Activated CD8-positive, alpha-beta T cell treated with anti-CD3 and anti-CD28 coated beads, Interleukin-2, amount 10 ng/mL, durations not matched to agents 7 days and 5 days (primary cell): ENCODE measurements at regions of chr1 and their contacts with region 1.

Region 1: GRCh38 chr1:151594143-151594625 is 17.7 kb upstream of the SNX27 start:
- DNase-seq: peak; percentile 90
- ATAC-seq: peak; percentile 98
- H3K4me3 Mint-ChIP-seq: peak overlapping the region; percentile 47
- H3K27ac Mint-ChIP-seq: no peak overlapping the region
- H3K4me1 Mint-ChIP-seq: peaks cover 9% of the 10 kb centered on the region
- H3K27me3 Mint-ChIP-seq: peaks cover 12% of the 10 kb centered on the region

Region 2: GRCh38 chr1:151502923-151503780 is 91.0 kb before region 1 on chr1:
- CTCF ChIA-PET with region 1: no interaction called
- POLR2A ChIA-PET with region 1: no interaction called
- DNase-seq: no peak
- ATAC-seq: peak; percentile 23
- H3K4me3 Mint-ChIP-seq: no peak overlapping the region
- H3K27ac Mint-ChIP-seq: no peak overlapping the region
- H3K4me1 Mint-ChIP-seq: peaks cover 12% of the 10 kb centered on the region
- H3K27me3 Mint-ChIP-seq: peaks cover 13% of the 10 kb centered on the region

Region 3: DNA sequence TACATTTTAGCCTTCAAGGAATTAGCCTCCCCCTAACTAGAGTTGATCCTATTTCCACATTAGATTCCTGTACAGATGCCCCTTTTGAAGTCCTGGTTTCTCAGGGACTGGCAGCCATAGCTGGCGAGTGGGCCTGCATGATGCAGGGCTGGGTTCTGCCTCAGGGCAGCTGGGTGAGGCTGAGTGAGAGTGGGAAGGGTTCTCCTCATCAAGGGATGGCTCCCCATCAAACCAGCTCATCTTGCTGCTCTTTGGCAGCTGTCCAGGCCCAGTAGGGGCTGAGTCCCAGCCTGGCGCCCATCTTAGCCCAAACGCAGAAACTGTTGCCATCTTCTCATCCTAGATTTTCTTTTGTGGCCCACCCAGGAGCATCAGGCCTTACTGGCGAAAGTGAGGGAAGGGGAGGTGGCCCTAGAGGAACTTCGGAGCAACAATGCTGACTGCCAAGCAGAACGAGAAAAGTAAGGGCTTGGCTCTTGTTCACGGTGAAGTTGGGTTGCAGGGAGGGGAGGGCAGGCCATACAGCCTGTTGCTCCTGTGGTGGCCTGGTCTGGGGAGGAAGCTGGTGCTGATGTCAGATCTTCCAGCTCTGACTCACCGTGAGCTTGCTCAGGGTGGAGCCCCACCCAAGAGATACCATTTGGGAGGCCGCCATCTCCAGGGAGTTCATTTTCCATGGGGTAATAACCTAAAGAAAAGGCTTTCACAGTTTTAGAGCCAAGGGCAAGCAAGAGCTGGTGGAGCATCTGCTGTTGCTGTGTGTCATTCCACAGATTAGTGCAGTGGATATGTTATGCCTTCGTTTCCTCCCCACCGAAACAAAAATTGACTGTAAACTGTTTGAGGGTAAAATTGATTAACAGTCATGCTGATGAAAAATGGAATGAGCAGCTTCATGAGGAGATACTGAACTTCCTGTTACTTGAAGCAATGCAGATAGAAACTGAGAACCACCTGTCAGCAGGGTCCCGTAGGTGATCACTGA is 19.3 kb before region 1 on chr1:
- CTCF ChIA-PET with region 1: interaction called, 26 read pairs
- POLR2A ChIA-PET with region 1: no interaction called
- DNase-seq: no peak
- ATAC-seq: peak; percentile 49
- H3K4me3 Mint-ChIP-seq: no peak overlapping the region
- H3K27ac Mint-ChIP-seq: no peak overlapping the region
- H3K4me1 Mint-ChIP-seq: peaks cover 8% of the 10 kb centered on the region
- H3K27me3 Mint-ChIP-seq: no peaks in the 10 kb centered on the region

Region 4: DNA sequence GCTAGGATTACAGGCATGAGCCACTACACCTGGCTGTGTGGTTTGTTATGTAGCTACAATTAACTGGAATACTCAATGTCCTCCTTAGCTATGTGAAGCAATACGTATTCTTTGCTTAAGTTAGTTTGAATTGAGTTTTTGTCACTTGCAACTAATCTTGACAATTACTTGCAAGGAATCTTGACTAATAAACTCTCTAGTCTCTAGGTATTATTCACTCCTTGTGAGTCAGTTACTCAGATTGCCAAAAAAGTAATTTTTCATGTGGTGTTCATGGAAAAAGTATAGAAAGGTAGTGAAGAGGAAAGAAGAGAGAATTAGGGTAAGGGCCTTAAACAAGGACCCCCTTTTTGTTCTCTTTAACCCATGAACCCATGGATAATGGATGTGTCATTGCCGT is 10.1 kb after region 1 on chr1:
- CTCF ChIA-PET with region 1: interaction called, 21 read pairs
- POLR2A ChIA-PET with region 1: no interaction called
- DNase-seq: no peak
- ATAC-seq: no peak
- H3K4me3 Mint-ChIP-seq: no peak overlapping the region
- H3K27ac Mint-ChIP-seq: no peak overlapping the region
- H3K4me1 Mint-ChIP-seq: no peaks in the 10 kb centered on the region
- H3K27me3 Mint-ChIP-seq: peaks cover 18% of the 10 kb centered on the region

Region 5: GRCh38 chr1:151733134-151733533 is 138.9 kb after region 1 on chr1:
- CTCF ChIA-PET with region 1: interaction called, 40 read pairs
- POLR2A ChIA-PET with region 1: no interaction called
- DNase-seq: no peak
- ATAC-seq: no peak
- H3K4me3 Mint-ChIP-seq: no peak overlapping the region
- H3K27ac Mint-ChIP-seq: no peak overlapping the region
- H3K4me1 Mint-ChIP-seq: no peaks in the 10 kb centered on the region
- H3K27me3 Mint-ChIP-seq: peaks cover 17% of the 10 kb centered on the region

Region 6: DNA sequence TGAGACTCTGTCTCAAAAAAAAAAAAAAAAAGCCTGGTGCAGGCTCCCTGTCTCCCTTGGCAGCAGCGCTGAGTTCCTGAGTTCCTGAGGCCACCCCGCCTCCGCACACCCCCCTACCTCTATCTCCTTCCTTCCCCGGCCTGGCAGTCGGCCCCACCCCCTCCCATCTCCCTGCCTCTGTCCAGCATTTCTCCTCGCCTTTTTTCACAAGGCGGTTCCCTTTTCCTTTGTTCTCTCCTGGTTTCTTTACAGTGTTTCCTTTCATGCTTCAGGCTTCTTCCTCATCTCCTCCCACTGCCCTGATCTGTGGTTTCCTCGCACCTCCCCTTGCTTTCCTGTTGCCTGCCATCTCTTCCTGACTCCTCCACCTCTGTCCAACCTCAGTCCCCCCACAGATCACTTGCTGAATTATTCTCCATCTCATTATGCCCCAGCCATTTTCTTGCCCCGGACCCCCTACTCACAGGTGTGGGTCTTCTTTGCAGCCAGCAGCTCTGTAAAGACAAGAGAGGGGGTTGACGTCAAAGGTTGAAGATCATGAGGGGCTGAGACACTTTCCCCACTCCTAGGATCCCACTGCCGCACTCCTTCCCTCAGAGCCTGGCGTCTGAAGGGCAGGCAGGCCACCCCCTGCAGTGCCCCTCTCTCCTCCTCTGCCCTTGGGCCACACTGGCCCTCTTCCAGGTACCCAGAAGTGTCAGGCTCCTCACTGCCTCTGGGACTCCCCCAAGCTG is 234.9 kb after region 1 on chr1:
- CTCF ChIA-PET with region 1: interaction called, 12 read pairs
- POLR2A ChIA-PET with region 1: no interaction called
- DNase-seq: no peak
- ATAC-seq: peak; percentile 7
- H3K4me3 Mint-ChIP-seq: peak overlapping the region; percentile 15
- H3K27ac Mint-ChIP-seq: peak overlapping the region; percentile 76
- H3K4me1 Mint-ChIP-seq: peaks cover 68% of the 10 kb centered on the region
- H3K27me3 Mint-ChIP-seq: peaks cover 2% of the 10 kb centered on the region

Region 7: GRCh38 chr1:151839457-151840405 is 245.5 kb after region 1 on chr1 and contains the start of gene C2CD4D:
- CTCF ChIA-PET with region 1: interaction called, 14 read pairs
- POLR2A ChIA-PET with region 1: interaction called, 3 read pairs
- DNase-seq: peak; percentile 72
- ATAC-seq: peak; percentile 71
- H3K4me3 Mint-ChIP-seq: peak within 1 kb of the TSS; percentile 70
- H3K27ac Mint-ChIP-seq: peak within 1 kb of the TSS; percentile 44
- H3K4me1 Mint-ChIP-seq: peaks cover 46% of the 10 kb centered on the region
- H3K27me3 Mint-ChIP-seq: peaks cover 12% of the 10 kb centered on the region
- total RNA-seq, gene C2CD4D: 0.23 to 0.26 TPM